Activated CD4-positive, alpha-beta T cell treated with anti-CD3 and anti-CD28 coated beads, Interleukin-2, amount 10 ng/mL, durations not matched to agents 24 days and 14 days (primary cell): ENCODE measurements at regions of chr16 and their contacts with region 1.

Region 1: DNA sequence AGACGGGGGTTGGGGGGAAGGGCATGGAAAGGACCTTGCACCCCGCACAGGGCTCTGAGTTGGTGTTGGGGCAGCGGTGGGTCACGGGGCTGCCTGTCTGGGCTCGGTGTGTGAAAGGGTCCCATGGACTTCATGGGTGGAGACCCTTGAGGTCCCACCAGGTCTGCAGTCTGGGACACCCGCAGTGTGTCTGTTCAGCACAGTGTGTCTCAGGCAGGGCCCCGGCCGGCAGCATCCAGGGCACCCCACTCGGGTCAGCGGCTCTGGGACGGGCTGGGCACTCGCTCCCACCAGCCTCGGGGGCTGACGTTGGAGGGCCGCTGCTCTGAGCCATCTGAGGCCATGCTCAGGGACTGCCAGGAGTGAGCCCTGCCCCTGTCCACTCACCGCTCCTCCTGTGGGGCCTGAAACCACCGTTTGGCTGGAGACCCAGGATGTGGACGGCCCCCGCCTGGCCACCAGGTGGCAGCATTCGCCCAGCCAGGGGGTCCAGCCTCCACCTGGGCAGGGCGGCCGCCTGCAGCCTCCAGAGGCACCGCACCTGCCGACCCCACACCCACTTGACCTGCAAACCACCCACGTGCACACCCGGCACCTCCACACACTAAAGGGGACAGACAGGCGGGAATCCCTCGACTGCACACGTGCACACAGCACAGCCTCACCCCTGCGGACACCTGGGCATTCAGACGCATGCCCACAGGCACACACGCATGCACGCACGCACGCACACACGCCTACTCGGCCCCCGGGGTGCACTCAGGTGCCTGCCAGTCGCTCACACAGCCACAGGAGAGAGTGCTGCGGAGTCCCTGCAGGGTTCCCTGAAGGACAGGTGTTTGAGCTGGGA is 10.1 kb upstream of the ZFPM1 start:
- DNase-seq: peak; percentile 94
- H3K4me3 Mint-ChIP-seq: no peak overlapping the region
- H3K27ac Mint-ChIP-seq: no peak overlapping the region
- H3K4me1 Mint-ChIP-seq: peaks cover 2% of the 10 kb centered on the region
- H3K27me3 Mint-ChIP-seq: no peaks in the 10 kb centered on the region

Region 2: GRCh38 chr16:88527186-88527936 is 84.4 kb after region 1 on chr16:
- intact Hi-C with region 1: loop called (anchors 1 kb)
- DNase-seq: peak; percentile 91
- H3K4me3 Mint-ChIP-seq: no peak overlapping the region
- H3K27ac Mint-ChIP-seq: no peak overlapping the region
- H3K4me1 Mint-ChIP-seq: no peaks in the 10 kb centered on the region
- H3K27me3 Mint-ChIP-seq: no peaks in the 10 kb centered on the region

Region 3: GRCh38 chr16:88561485-88562369 is 118.8 kb after region 1 on chr16:
- intact Hi-C with region 1: loop called (anchors 1 kb)
- DNase-seq: peak; percentile 83
- H3K4me3 Mint-ChIP-seq: no peak overlapping the region
- H3K27ac Mint-ChIP-seq: no peak overlapping the region
- H3K4me1 Mint-ChIP-seq: peaks cover 15% of the 10 kb centered on the region
- H3K27me3 Mint-ChIP-seq: no peaks in the 10 kb centered on the region